Sigmoid colon (tissue), 7 donors: ENCODE measurements at regions of chr10 and their contacts with region 1.

Region 1: DNA sequence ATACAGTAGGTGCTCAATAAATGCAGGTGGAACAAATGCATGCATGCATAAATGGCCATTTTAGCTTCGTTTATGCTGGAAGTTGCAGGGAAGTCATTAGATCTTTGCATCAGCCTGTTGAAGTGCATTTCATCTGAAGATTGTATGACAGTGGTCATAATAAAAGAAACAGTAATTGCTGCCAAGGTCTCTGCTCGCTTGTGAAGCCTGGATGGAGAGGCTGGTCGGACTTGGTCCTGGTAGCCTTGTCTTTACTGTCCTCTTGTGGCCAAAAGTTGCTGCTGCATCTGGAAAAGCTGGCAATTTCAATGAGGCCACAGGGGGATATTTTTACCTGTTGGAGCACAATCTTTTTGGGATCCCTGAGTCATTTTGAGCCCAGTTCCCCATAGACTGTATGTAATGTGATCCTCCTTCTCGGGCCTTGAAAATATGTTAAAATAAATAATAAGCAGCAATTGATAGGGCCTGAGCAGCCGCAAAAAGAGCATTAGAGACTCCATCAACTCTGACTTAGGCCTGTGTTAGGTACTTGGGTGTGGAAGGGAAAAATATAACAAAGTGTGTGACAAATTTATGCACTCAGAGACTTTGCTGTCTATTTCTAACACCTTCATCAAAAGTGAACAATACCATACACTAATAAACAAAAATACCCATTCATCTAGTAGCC is 31.6 kb upstream of the HABP2 start:
- DNase-seq: peak; percentile 90
- H3K4me3 ChIP-seq: no peak overlapping the region
- H3K27ac ChIP-seq: peak overlapping the region in 2 of 4 donors; percentile 16 to 27
- H3K4me1 ChIP-seq: peaks cover 0 to 12% (median 8%) of the 10 kb centered on the region in 4 donors
- H3K27me3 ChIP-seq: no peaks in the 10 kb centered on the region
- CTCF ChIP-seq: peak; percentile 95 to 99 (median 96)
- EP300 ChIP-seq: no peak
- POLR2A ChIP-seq: no peak

Region 2: GRCh38 chr10:113126229-113127201 is 394.7 kb before region 1 on chr10:
- intact Hi-C with region 1: loop called (anchors 10 kb)
- DNase-seq: peak; percentile 86
- H3K4me3 ChIP-seq: peak overlapping the region in 3 of 4 donors; percentile 33 to 44 (median 39)
- H3K27ac ChIP-seq: peak overlapping the region in 2 of 4 donors; percentile 11 to 29
- H3K4me1 ChIP-seq: peaks cover 0 to 23% (median 17%) of the 10 kb centered on the region in 4 donors
- H3K27me3 ChIP-seq: no peaks in the 10 kb centered on the region
- CTCF ChIP-seq: peak in 1 of 4 experiments; percentile 83
- EP300 ChIP-seq: no peak
- POLR2A ChIP-seq: no peak

Region 3: GRCh38 chr10:113297226-113297625 is 224.0 kb before region 1 on chr10:
- intact Hi-C with region 1: no loop called
- DNase-seq: no peak
- H3K4me3 ChIP-seq: no peak overlapping the region
- H3K27ac ChIP-seq: no peak overlapping the region
- H3K4me1 ChIP-seq: no peaks in the 10 kb centered on the region
- H3K27me3 ChIP-seq: no peaks in the 10 kb centered on the region
- CTCF ChIP-seq: no peak
- EP300 ChIP-seq: no peak
- POLR2A ChIP-seq: no peak

Region 4: GRCh38 chr10:113390896-113391295 is 130.4 kb before region 1 on chr10:
- intact Hi-C with region 1: loop called (anchors 5 kb)
- DNase-seq: no peak
- H3K4me3 ChIP-seq: no peak overlapping the region
- H3K27ac ChIP-seq: no peak overlapping the region
- H3K4me1 ChIP-seq: peaks cover 0 to 9% (median 2%) of the 10 kb centered on the region in 4 donors
- H3K27me3 ChIP-seq: no peaks in the 10 kb centered on the region
- CTCF ChIP-seq: no peak
- EP300 ChIP-seq: no peak
- POLR2A ChIP-seq: no peak

Region 5: DNA sequence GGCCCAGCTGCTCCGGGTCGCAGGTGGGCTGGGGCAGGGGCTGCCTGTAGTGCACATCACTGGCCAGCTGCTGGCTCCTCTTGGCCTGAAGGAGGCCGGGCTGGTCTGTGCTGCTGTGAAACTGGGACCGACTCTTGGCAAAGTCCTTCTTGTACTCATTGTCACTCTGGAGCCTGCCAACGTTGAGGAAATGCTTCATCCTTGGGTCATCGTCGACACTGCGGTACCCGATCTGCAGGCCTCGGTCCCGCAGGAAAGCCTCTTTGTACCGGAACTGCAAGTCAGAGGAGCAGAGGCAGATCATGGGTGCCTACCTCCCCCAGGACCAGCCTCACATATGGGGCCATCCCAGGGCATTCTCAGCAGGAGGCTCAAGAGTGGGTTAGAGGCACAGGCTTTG is 69.4 kb after region 1 on chr10:
- intact Hi-C with region 1: no loop called
- DNase-seq: no peak
- H3K4me3 ChIP-seq: no peak overlapping the region
- H3K27ac ChIP-seq: no peak overlapping the region
- H3K4me1 ChIP-seq: no peaks in the 10 kb centered on the region
- H3K27me3 ChIP-seq: no peaks in the 10 kb centered on the region
- CTCF ChIP-seq: no peak
- EP300 ChIP-seq: no peak
- POLR2A ChIP-seq: no peak